RWPE1 (cell line): ENCODE measurements at regions of chr15 and their contacts with region 1.

Region 1: GRCh38 chr15:78195735-78196201 is 38.6 kb downstream of the ACSBG1 start:
- DNase-seq: peak; percentile 67
- H3K27ac ChIP-seq: no peak overlapping the region
- CTCF ChIP-seq: peak; percentile 83

Region 2: GRCh38 chr15:78131295-78132061 is 64.3 kb before region 1 on chr15 and contains the start of gene CIB2:
- CTCF ChIA-PET with region 1: interaction called, 11 read pairs
- POLR2A ChIA-PET with region 1: no interaction called
- DNase-seq: peak; percentile 78
- H3K27ac ChIP-seq: peak within 1 kb of the TSS; percentile 22
- CTCF ChIP-seq: peak; percentile 95

Region 3: GRCh38 chr15:78212546-78213424 is 17.0 kb after region 1 on chr15:
- CTCF ChIA-PET with region 1: interaction called, 14 read pairs
- POLR2A ChIA-PET with region 1: no interaction called
- DNase-seq: peak; percentile 87
- H3K27ac ChIP-seq: peak overlapping the region; percentile 72
- CTCF ChIP-seq: no peak

Region 4: DNA sequence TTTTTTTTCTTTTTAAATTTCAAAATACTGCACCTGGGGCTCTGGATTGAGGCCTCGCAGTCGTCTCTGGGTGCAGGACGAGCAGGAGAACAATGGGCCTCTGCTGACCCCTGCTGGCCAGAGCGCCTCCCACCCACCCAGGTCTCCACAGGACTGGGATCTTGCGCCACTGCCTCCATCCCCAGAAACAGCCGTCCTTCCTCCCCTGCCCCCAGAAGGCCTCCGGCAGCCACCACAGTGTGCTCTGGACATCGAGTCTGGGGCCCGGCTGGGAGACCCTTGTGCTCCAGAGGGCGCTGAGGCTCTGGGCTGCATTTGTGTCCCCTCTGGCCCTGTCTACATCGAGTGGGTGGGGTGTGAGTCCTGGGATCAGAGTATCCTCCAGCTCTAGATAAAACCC is 45.2 kb after region 1 on chr15:
- CTCF ChIA-PET with region 1: interaction called, 29 read pairs
- POLR2A ChIA-PET with region 1: no interaction called
- DNase-seq: peak; percentile 89
- H3K27ac ChIP-seq: no peak overlapping the region
- CTCF ChIP-seq: peak; percentile 95

Region 5: DNA sequence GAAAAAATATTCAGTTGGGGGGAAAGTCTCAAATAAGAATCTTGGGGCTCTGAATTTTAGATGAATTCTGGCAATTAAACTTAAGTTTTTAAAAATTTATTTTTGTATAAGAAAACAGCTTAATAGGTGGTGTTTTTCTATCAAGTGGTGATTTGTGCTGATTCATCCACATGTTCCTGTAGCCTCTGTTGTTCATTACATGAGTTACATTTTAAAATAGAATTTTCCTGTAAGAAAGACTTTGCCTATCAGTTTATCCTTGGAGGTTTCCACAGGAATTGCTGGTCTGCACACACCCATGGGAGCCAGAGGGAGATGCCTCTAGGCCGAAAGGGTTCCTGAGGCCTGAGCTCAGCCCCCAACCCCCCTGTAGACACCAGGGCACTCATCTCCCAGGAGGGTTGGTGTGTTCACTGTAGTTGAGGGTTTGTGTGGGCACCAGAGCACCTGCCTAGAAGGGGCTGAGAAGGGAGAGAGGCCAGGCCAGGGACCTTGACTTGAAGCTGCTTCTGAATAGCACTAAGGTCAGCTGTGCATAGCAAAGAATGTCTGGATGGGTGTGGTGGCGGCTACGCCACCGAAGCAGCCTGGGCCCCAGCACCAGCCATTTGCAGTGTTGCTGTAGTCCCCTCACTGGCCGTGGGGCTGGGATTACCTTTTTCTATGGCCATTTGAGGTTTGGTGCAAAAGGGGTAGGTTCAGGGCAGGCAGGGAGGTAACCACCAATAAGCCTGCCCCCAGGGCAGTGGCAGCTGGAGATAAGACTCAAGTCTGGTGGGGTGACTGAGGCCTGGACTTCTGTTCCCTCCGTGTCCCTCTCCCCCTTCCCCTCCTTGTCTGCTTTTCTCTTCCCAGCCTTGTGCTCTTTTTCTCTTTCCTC is 80.5 kb after region 1 on chr15:
- CTCF ChIA-PET with region 1: no interaction called
- POLR2A ChIA-PET with region 1: no interaction called
- DNase-seq: no peak
- H3K27ac ChIP-seq: no peak overlapping the region
- CTCF ChIP-seq: no peak

Region 6: DNA sequence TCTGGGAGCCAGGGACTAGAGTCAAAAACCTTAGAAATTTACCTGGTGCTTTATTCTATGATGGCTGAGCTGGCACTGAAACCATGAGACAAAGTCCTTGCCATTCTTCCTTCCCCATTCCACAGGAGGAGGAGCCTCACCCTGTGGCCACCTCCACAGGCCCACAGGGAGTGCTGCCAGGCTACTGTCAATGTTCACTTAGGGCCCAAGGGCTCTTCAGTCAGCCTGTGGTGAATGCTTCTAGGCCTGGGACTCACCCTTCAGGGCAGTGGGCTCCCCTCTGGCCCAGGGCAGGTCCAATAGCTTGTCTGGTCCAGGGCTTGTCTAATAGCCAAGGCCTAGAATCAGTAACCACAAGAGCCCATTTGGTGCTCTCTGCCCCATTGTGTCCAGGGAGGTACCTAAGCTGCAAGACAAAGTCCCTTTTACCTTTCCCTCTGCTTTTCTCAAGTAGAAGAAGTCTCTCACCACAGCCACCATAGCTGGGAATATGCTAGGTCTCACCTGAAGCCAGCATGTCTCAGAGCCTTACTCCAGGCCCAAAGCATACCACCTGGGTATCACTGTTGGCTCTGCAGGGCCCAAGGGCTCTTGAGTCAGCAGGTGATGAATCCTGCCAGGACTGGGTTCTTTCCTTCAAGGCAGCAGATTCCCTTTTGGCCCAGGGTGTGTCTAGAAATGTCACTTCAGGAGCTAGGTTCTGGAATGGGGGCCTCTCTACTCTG is 507.0 kb after region 1 on chr15:
- CTCF ChIA-PET with region 1: no interaction called
- POLR2A ChIA-PET with region 1: no interaction called
- DNase-seq: no peak
- H3K27ac ChIP-seq: no peak overlapping the region
- CTCF ChIP-seq: no peak